WTC11 (cell line): ENCODE measurements at regions of chr11 and their contacts with region 1.

Region 1: GRCh38 chr11:14773755-14774154 is 118.3 kb downstream of the CYP2R1 start:
- DNase-seq: peak; percentile 14
- ATAC-seq: peak; percentile 89
- H3K4me3 Mint-ChIP-seq: no peak overlapping the region
- H3K27ac Mint-ChIP-seq: no peak overlapping the region
- H3K4me1 Mint-ChIP-seq: peaks cover 6% of the 10 kb centered on the region
- H3K27me3 Mint-ChIP-seq: no peaks in the 10 kb centered on the region
- CTCF ChIP-seq: peak; percentile 29; the same call in 1 of the 2 replicates

Region 2: DNA sequence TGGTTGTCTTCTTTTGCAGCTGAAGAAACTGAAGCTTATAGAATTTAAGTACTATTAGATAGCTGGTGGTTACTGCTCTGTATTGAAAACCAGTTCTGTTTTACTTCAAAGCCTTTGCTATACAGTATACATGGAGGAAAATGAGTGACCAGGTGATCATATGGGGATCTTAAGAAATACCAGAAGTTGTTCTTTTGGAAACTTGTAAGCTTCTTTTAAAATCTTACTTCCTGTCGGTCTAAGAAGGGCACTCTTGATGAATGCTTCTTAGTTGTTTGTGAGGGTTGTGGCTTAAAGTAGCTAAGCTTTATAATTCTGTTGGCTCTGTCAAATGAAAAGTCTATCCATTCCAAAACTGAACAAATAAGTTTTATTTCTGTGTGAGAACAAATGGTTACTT is 75.0 kb before region 1 on chr11:
- CTCF ChIA-PET with region 1: no interaction called
- POLR2A ChIA-PET with region 1: no interaction called
- DNase-seq: no peak
- ATAC-seq: no peak
- H3K4me3 Mint-ChIP-seq: no peak overlapping the region
- H3K27ac Mint-ChIP-seq: no peak overlapping the region
- H3K4me1 Mint-ChIP-seq: peaks cover 5% of the 10 kb centered on the region; the same call in 1 of the 2 replicates
- H3K27me3 Mint-ChIP-seq: no peaks in the 10 kb centered on the region; the same call in 1 of the 2 replicates
- CTCF ChIP-seq: no peak

Region 3: GRCh38 chr11:14789879-14790484 is 16.2 kb after region 1 on chr11:
- CTCF ChIA-PET with region 1: interaction called, 13 read pairs
- POLR2A ChIA-PET with region 1: no interaction called
- DNase-seq: no peak
- ATAC-seq: no peak
- H3K4me3 Mint-ChIP-seq: no peak overlapping the region
- H3K27ac Mint-ChIP-seq: no peak overlapping the region
- H3K4me1 Mint-ChIP-seq: peaks cover 4% of the 10 kb centered on the region; the same call in 1 of the 2 replicates
- H3K27me3 Mint-ChIP-seq: no peaks in the 10 kb centered on the region; the same call in 1 of the 2 replicates
- CTCF ChIP-seq: no peak

Region 4: GRCh38 chr11:14826600-14826999 is 52.8 kb after region 1 on chr11:
- CTCF ChIA-PET with region 1: no interaction called
- POLR2A ChIA-PET with region 1: no interaction called
- DNase-seq: no peak
- ATAC-seq: no peak
- H3K4me3 Mint-ChIP-seq: no peak overlapping the region
- H3K27ac Mint-ChIP-seq: no peak overlapping the region
- H3K4me1 Mint-ChIP-seq: no peaks in the 10 kb centered on the region
- H3K27me3 Mint-ChIP-seq: no peaks in the 10 kb centered on the region
- CTCF ChIP-seq: no peak